ENCODE measurements at regions of chr6 and their contacts with region 1.

Region 1: DNA sequence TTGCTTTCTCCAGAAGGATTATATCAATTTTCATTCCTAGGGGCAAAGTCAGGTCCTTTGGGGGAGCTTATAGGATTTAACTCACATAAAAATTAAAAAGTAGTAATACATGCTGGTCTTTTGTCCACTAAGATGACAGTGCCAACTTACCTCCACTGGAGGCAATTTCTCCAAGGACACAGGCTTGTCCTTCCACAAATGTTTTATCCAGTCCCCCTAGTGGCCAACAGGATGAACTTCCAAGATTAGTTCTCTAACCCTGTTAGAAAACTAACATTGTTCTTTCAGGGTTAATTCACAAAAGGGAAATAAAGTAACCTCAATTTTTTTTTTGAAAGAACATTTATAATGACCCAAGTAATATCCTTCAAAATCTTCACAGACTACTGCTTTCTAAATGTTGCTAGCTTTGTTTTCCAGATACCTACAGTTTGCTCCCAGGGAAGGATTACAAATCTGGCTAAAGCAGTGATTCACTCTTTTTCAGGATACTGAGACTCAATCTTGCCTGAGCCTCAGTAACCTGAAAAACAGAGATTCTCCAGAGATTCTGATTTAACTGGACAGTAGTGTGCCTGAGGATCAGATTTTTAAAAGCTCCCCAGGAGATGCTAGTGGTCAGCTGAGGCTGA is 31.7 kb upstream of the UBR2 start:
- DNase-seq: no peak
- ATAC-seq: peak; percentile 67
- H3K4me3 Mint-ChIP-seq: no peak overlapping the region
- H3K27ac Mint-ChIP-seq: no peak overlapping the region
- H3K4me1 Mint-ChIP-seq: no peaks in the 10 kb centered on the region
- H3K27me3 Mint-ChIP-seq: no peaks in the 10 kb centered on the region

Region 2: DNA sequence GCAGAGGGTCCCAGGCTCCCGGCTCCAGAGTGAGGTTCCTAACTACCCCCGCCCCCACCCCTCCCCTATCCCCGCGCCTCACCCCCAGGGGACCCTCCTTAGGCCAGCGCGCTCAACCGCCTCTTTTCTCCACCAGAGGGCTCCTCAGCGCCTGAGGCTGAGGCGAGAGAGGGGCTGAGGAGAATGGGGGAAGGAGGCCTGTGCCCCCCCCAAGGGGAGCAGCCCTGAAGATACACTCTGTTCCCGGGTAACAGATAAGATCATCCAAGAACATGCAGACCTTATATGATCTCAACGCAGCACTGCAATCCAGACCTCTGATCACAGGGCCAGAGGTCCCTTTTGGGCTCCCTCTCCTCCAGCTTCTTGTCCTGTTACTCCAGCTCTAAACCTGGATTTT is 271.2 kb before region 1 on chr6:
- CTCF ChIA-PET with region 1: interaction called, 10 read pairs
- DNase-seq: no peak
- ATAC-seq: peak; percentile 66
- H3K4me3 Mint-ChIP-seq: no peak overlapping the region
- H3K27ac Mint-ChIP-seq: peak overlapping the region; percentile 49
- H3K4me1 Mint-ChIP-seq: peaks cover 12% of the 10 kb centered on the region
- H3K27me3 Mint-ChIP-seq: no peaks in the 10 kb centered on the region

Region 3: GRCh38 chr6:42511803-42512422 is 20.2 kb before region 1 on chr6:
- CTCF ChIA-PET with region 1: interaction called, 10 read pairs
- DNase-seq: no peak
- ATAC-seq: no peak
- H3K4me3 Mint-ChIP-seq: no peak overlapping the region
- H3K27ac Mint-ChIP-seq: no peak overlapping the region
- H3K4me1 Mint-ChIP-seq: peaks cover 7% of the 10 kb centered on the region
- H3K27me3 Mint-ChIP-seq: no peaks in the 10 kb centered on the region

Measured in activated CD8-positive, alpha-beta memory T cell treated with anti-CD3 and anti-CD28 coated beads, Interleukin-2, amount 10 ng/mL, durations not matched to agents 7 days and 5 days (primary cell).